ENCODE measurements at regions of chr10 and their contacts with region 1.

Region 1: DNA sequence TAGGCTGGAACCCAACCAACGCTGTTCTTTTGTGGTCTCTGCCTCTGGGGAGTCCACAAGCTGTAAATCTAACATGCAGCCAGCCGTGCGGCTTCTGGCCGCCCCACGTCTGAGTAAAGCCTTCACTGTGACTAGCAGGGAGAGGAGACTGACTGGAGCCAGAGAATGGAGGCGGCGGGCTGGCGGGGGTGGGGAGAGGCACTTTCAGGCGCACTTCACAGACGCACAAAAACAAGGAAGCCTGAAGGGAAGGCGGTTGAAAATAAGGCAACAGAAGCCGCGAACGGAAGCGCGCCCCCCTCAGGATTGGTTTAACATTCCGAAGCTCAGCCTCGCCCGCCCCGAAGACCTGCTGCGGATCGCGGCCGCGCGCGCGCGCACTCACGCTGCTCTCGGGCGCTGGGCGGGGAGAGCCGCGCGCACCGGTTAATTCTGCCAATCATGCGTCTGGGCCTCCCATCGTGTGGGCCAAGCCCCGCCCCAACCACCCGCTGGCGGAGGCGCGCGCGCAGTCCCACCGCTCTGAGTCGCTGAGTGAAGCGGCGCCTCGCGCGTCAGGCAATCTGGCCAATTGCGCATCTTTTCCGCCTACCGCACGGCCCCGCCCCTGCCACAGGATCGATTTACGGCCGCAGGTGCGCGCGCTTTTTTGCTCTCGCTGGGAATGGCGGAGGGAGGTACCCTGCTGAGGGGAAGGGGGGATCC is at the start of gene SFR1:
- DNase-seq: peak; percentile 97 to 99
- H3K4me3 ChIP-seq: peak within 1 kb of the TSS; percentile 68 to 96 (median 88)
- H3K27ac ChIP-seq: peak within 1 kb of the TSS; percentile 99
- H3K4me1 ChIP-seq: peaks cover 0 to 8% (median 4%) of the 10 kb centered on the region in 4 experiments; a peak in 3 of 7 replicates
- H3K27me3 ChIP-seq: no peaks in the 10 kb centered on the region
- CTCF ChIP-seq: peak; percentile 54 to 67 (median 62)
- EP300 ChIP-seq: no peak; a peak in 1 of 3 replicates
- POLR2A ChIP-seq: peak; percentile 85 to 90
- RAD21 ChIP-seq: peak; percentile 43 to 59
- total RNA-seq, gene SFR1: 6.9 and 7.7 TPM in 2 replicates

Region 2: GRCh38 chr10:104034401-104035193 is 87.1 kb before region 1 on chr10:
- CTCF ChIA-PET with region 1: interaction called, 6 read pairs
- POLR2A ChIA-PET with region 1: interaction called, 10 read pairs
- DNase-seq: peak in 1 of 2 experiments; percentile 46
- H3K4me3 ChIP-seq: no peak overlapping the region
- H3K27ac ChIP-seq: no peak overlapping the region
- H3K4me1 ChIP-seq: peaks cover 3 to 15% (median 10%) of the 10 kb centered on the region in 4 experiments; a peak in 5 of 7 replicates
- H3K27me3 ChIP-seq: no peaks in the 10 kb centered on the region
- CTCF ChIP-seq: no peak
- EP300 ChIP-seq: no peak
- POLR2A ChIP-seq: no peak
- RAD21 ChIP-seq: no peak

Region 3: GRCh38 chr10:104054430-104054829 is 67.2 kb before region 1 on chr10:
- CTCF ChIA-PET with region 1: interaction called, 32 read pairs
- POLR2A ChIA-PET with region 1: interaction called, 43 read pairs
- DNase-seq: no peak
- H3K4me3 ChIP-seq: no peak overlapping the region
- H3K27ac ChIP-seq: no peak overlapping the region
- H3K4me1 ChIP-seq: peaks cover 2 to 9% (median 4%) of the 10 kb centered on the region in 4 experiments; a peak in 4 of 7 replicates
- H3K27me3 ChIP-seq: no peaks in the 10 kb centered on the region
- CTCF ChIP-seq: no peak
- EP300 ChIP-seq: no peak
- POLR2A ChIP-seq: no peak
- RAD21 ChIP-seq: no peak

Region 4: GRCh38 chr10:104081998-104082397 is 39.7 kb before region 1 on chr10:
- CTCF ChIA-PET with region 1: interaction called, 6 read pairs
- POLR2A ChIA-PET with region 1: interaction called, 13 read pairs
- DNase-seq: no peak
- H3K4me3 ChIP-seq: no peak overlapping the region
- H3K27ac ChIP-seq: no peak overlapping the region
- H3K4me1 ChIP-seq: peaks cover 3 to 10% (median 4%) of the 10 kb centered on the region in 4 experiments
- H3K27me3 ChIP-seq: no peaks in the 10 kb centered on the region
- CTCF ChIP-seq: no peak
- EP300 ChIP-seq: no peak
- POLR2A ChIP-seq: no peak
- RAD21 ChIP-seq: no peak

Region 5: GRCh38 chr10:104139221-104139620 is 17.5 kb after region 1 on chr10:
- CTCF ChIA-PET with region 1: interaction called, 11 read pairs
- POLR2A ChIA-PET with region 1: interaction called, 21 read pairs
- DNase-seq: no peak
- H3K4me3 ChIP-seq: no peak overlapping the region
- H3K27ac ChIP-seq: no peak overlapping the region
- H3K4me1 ChIP-seq: no peaks in the 10 kb centered on the region
- H3K27me3 ChIP-seq: no peaks in the 10 kb centered on the region
- CTCF ChIP-seq: peak in 2 of 3 experiments; percentile 25 to 41; a peak in 2 of 4 replicates
- EP300 ChIP-seq: no peak
- POLR2A ChIP-seq: no peak
- RAD21 ChIP-seq: peak; percentile 44 to 48; a peak in 3 of 4 replicates

Region 6: GRCh38 chr10:104297697-104298660 is 176.3 kb after region 1 on chr10:
- CTCF ChIA-PET with region 1: no interaction called
- POLR2A ChIA-PET with region 1: no interaction called
- DNase-seq: peak; percentile 50 to 93
- H3K4me3 ChIP-seq: no peak overlapping the region
- H3K27ac ChIP-seq: no peak overlapping the region
- H3K4me1 ChIP-seq: no peaks in the 10 kb centered on the region
- H3K27me3 ChIP-seq: no peaks in the 10 kb centered on the region
- CTCF ChIP-seq: peak; percentile 88 to 96 (median 94)
- EP300 ChIP-seq: no peak
- POLR2A ChIP-seq: no peak
- RAD21 ChIP-seq: peak; percentile 43 to 64

Region 7: GRCh38 chr10:104368381-104368780 is 246.7 kb after region 1 on chr10:
- CTCF ChIA-PET with region 1: no interaction called
- POLR2A ChIA-PET with region 1: no interaction called
- DNase-seq: no peak
- H3K4me3 ChIP-seq: no peak overlapping the region
- H3K27ac ChIP-seq: no peak overlapping the region
- H3K4me1 ChIP-seq: peaks cover 0 to 3% (median 1%) of the 10 kb centered on the region in 4 experiments; a peak in 2 of 7 replicates
- H3K27me3 ChIP-seq: no peaks in the 10 kb centered on the region
- CTCF ChIP-seq: no peak
- EP300 ChIP-seq: no peak
- POLR2A ChIP-seq: no peak
- RAD21 ChIP-seq: no peak

Region 8: DNA sequence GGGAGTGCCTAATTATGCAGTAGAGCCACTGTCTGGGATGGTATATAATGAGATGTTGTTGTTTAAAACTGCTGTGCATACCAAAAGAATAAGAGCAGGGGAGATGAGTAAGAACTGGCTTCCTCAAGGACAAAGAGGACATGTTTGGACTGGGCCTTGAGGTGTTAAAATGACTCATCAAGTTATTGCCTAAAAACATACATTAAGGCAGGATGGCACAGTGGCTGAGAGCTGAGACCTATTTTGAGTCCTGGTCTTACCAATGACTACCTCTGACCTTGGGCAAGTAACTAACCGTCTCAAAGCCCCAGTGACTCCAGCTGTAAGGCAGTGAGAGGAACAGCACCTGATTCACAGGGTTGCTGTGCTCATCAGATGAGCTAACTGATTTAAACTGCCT is 303.0 kb after region 1 on chr10:
- CTCF ChIA-PET with region 1: no interaction called
- POLR2A ChIA-PET with region 1: no interaction called
- DNase-seq: no peak
- H3K4me3 ChIP-seq: no peak overlapping the region
- H3K27ac ChIP-seq: no peak overlapping the region
- H3K4me1 ChIP-seq: peaks cover 0 to 6% (median 2%) of the 10 kb centered on the region in 4 experiments; a peak in 4 of 7 replicates
- H3K27me3 ChIP-seq: no peaks in the 10 kb centered on the region
- CTCF ChIP-seq: no peak
- EP300 ChIP-seq: no peak
- POLR2A ChIP-seq: no peak
- RAD21 ChIP-seq: no peak